Sigmoid colon (tissue), 7 donors: ENCODE measurements at regions of chr3 and their contacts with region 1.

Region 1: DNA sequence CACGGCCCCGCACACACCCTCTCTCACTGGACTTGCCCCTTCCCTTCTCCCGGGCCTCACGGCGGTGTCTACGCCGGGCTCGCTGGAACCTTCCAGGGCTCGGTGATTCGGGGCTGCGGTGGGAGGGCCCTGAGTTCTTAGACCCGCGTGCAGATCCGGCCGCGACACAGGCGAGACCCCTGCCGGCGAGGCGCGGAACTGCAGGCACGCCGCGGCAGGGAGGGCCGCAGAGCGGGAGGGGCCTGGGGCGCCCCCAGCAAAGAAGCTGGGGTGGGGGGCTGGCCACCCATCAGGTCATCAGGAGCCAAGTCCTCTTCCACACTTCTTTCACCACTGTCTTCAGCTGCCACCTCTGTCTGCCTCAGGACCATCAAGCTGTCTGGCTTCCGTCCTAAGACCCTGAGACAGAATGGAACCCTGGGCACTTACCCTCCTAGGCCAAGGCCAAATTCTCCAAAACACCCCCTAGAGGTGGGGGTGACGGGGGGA is 164.5 kb downstream of the XXYLT1 start:
- DNase-seq: peak; percentile 86
- H3K4me3 ChIP-seq: peak overlapping the region in 1 of 4 donors; percentile 25
- H3K27ac ChIP-seq: peak overlapping the region in 2 of 4 donors; percentile 31 to 39
- H3K4me1 ChIP-seq: peaks cover 0 to 30% (median 18%) of the 10 kb centered on the region in 4 donors
- H3K27me3 ChIP-seq: no peaks in the 10 kb centered on the region
- CTCF ChIP-seq: peak; percentile 97 to 100 (median 99)
- EP300 ChIP-seq: no peak
- POLR2A ChIP-seq: no peak

Region 2: DNA sequence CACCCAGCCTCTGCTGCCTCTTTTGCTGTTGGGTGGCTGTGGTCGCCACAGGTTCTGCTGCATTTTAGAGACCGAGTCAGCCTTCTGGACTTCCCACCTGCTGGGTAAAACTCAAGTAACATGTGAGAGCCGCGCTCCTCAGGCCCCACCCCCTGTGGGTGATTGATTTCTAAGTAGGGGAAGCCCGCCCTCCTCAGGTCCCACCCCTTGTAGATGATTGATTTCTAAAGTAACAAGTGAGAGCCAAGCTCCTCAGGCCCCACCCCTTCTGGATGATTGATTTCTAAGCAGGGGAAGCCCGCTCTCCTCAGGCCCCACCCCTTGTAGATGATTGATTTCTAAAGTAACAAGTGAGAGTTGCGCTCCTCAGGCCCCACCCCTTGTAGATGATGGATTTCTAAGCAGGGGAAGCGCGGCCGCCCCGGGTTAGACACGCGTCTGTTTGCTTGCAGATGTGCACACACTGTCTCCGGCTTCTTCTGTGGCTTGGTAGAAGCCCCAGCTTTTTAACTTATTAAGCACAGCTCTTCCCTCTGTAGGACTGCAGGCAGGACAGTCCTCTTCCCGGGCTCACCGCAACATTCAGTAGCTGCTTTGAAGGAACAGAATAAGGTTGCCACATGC is 337.3 kb before region 1 on chr3:
- intact Hi-C with region 1: loop called (anchors 5 kb)
- DNase-seq: peak; percentile 98
- H3K4me3 ChIP-seq: peak overlapping the region in 3 of 4 donors; percentile 33 to 43 (median 41)
- H3K27ac ChIP-seq: peak overlapping the region; percentile 47 to 60 (median 50)
- H3K4me1 ChIP-seq: peaks cover 0 to 14% (median 10%) of the 10 kb centered on the region in 4 donors
- H3K27me3 ChIP-seq: no peaks in the 10 kb centered on the region
- CTCF ChIP-seq: no peak
- EP300 ChIP-seq: no peak
- POLR2A ChIP-seq: no peak

Region 3: DNA sequence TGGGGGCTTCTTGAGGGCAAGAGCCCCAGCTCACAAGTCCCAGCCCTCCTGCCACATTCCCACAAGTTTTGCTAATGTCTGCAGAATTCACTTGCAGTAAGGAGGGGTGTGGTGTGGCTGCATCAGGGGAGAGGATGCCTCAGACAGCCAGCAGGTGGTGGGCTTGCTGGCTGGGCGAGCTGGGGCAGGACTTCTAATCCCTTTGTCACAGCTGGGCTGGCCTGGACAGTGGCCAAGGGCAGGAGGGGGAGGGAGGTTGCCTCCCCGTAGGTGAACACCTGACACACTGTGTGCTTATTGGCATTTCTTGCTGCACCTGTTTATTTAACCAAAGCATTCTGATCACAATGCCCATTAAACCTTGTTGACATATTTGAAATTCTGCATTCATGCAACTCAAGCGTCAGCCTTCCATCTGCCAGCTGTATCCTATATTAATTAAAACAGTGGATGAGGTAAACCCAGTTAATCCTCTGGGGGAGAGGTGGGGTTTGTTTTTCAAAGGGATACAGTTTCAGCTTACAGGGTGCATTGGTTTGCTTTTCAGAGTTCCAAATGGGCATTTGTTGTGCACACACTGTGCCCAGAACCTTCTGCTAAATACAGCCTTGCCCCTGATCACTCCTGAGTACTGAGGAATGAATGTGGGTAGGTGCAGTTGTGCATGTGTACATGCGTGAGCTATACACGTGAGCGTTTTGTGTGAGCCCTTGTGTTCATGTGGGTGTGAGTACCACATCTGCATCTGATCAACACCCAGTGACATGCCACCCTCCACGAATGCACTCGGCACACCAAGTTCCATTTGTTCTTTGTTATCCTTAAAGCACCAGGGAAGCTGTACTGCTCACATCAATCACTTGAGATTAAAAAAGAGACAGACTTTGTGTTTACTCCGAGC is 104.3 kb before region 1 on chr3:
- intact Hi-C with region 1: loop called (anchors 5 kb)
- DNase-seq: no peak
- H3K4me3 ChIP-seq: no peak overlapping the region
- H3K27ac ChIP-seq: peak overlapping the region in 1 of 4 donors; percentile 14
- H3K4me1 ChIP-seq: peaks cover 0 to 4% (median 0%) of the 10 kb centered on the region in 4 donors
- H3K27me3 ChIP-seq: peaks cover 0 to 3% (median 0%) of the 10 kb centered on the region in 3 donors
- CTCF ChIP-seq: peak in 3 of 4 experiments; percentile 15 to 31 (median 31)
- EP300 ChIP-seq: no peak
- POLR2A ChIP-seq: no peak